OCI-LY7 (cell line): ENCODE measurements at regions of chr6 and their contacts with region 1.

Region 1: GRCh38 chr6:47413752-47414422 is 63.7 kb upstream of the CD2AP start:
- DNase-seq: peak; percentile 82
- H3K4me3 ChIP-seq: peak overlapping the region; percentile 64
- H3K27ac ChIP-seq: peak overlapping the region; percentile 52
- H3K4me1 ChIP-seq: peaks cover 23% of the 10 kb centered on the region
- CTCF ChIP-seq: peak; percentile 99

Region 2: GRCh38 chr6:47009566-47009965 is 404.3 kb before region 1 on chr6:
- CTCF ChIA-PET with region 1: no interaction called
- POLR2A ChIA-PET with region 1: no interaction called
- intact Hi-C with region 1: no loop called
- DNase-seq: no peak
- H3K4me3 ChIP-seq: no peak overlapping the region
- H3K27ac ChIP-seq: no peak overlapping the region
- H3K4me1 ChIP-seq: no peaks in the 10 kb centered on the region
- CTCF ChIP-seq: peak; percentile 30; the same call in 1 of the 2 replicates

Region 3: GRCh38 chr6:47097092-47097945 is 316.6 kb before region 1 on chr6:
- CTCF ChIA-PET with region 1: no interaction called
- POLR2A ChIA-PET with region 1: interaction called, 3 read pairs
- intact Hi-C with region 1: loop called (anchors 2 kb)
- DNase-seq: peak; percentile 90
- H3K4me3 ChIP-seq: no peak overlapping the region
- H3K27ac ChIP-seq: no peak overlapping the region
- H3K4me1 ChIP-seq: peaks cover 15% of the 10 kb centered on the region
- CTCF ChIP-seq: peak; percentile 97

Region 4: GRCh38 chr6:47455534-47456209 is 41.8 kb after region 1 on chr6:
- CTCF ChIA-PET with region 1: no interaction called
- POLR2A ChIA-PET with region 1: interaction called, 4 read pairs
- intact Hi-C with region 1: loop called (anchors 1 kb)
- DNase-seq: no peak
- H3K4me3 ChIP-seq: no peak overlapping the region
- H3K27ac ChIP-seq: no peak overlapping the region
- H3K4me1 ChIP-seq: peaks cover 30% of the 10 kb centered on the region
- CTCF ChIP-seq: no peak

Region 5: GRCh38 chr6:47631269-47631772 is 217.4 kb after region 1 on chr6:
- CTCF ChIA-PET with region 1: interaction called, 5 read pairs
- POLR2A ChIA-PET with region 1: no interaction called
- intact Hi-C with region 1: loop called (anchors 1 kb)
- DNase-seq: peak; percentile 72
- H3K4me3 ChIP-seq: no peak overlapping the region
- H3K27ac ChIP-seq: no peak overlapping the region
- H3K4me1 ChIP-seq: no peaks in the 10 kb centered on the region
- CTCF ChIP-seq: peak; percentile 86

Region 6: DNA sequence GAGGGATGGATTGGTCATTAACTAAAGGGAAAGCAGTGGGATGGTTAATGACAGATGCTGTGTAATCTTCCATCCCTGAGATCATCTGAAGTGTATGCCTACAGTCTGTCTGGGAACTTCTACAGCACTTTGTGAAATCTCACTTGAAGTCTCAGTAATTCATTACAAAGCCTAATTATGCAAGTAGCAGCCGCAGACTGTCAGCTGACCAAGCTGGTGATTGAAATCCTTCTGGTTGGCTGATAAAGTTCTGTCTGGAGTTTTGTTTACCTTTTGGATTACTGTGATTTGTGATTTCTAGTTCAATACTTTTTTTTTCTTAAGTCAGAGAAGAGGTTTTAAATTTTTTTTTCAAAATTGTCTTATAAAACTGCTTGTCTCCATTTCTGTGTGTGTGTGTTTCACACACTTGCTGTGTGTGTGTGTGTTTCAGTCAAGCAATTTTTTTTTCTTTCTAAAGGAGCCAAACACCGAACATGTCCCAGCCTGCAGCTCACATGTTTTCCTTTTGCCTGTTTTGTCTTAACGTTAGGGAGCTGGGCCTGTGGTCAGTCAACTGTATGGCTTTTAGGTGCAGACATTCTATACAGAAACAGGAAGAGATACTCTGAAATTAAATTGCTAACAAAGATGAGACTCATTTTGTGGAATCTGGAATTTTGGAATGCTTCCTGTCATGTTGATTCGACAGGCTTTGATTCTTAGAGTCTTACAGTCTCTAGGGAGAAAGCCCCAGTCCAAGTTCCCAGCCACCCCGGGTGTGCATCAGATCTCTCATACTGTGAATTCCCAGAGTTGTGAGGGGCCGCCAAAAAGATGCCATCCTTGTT is 256.0 kb after region 1 on chr6:
- CTCF ChIA-PET with region 1: no interaction called
- POLR2A ChIA-PET with region 1: no interaction called
- intact Hi-C with region 1: no loop called
- DNase-seq: no peak
- H3K4me3 ChIP-seq: no peak overlapping the region
- H3K27ac ChIP-seq: no peak overlapping the region
- H3K4me1 ChIP-seq: no peaks in the 10 kb centered on the region
- CTCF ChIP-seq: no peak

Region 7: DNA sequence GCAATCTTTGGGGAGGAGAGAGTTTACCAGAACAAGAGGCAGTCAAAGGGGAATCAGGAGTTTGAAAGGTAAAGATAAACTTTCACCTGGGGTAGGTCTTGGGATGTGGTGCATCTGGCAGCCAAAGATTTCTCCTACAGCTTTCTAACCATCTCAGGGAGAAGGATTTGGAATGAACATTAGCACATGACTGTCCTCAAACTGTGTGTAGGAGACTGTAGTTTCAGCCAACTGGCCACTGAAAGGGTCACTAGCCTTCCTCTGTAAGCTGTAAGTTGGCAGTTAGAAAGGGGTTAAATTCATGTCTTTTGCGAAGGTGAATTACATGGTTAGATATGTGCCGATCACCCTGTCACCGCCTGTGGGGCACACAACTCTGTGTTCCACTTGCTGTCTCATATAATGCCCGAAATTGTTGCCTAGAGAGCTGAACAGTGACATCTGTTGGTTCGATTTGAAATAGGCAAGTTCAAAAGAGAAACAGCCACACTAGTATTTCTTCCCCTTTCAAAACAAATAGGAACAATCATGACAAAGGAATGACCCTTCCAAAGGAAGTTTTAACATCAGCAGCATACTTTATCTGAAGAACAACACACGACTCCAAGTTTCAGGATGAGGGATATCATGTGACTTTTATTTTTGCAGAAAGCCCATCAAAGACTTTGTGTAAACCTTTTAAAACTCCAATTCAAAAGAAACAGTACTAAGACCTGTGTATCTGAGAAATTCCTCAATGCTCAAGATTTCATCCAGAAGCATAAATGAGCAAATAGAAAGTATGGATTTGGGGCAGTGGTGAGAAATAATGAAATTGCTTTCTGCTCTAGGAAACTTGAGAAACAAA is 366.8 kb after region 1 on chr6:
- CTCF ChIA-PET with region 1: no interaction called
- POLR2A ChIA-PET with region 1: no interaction called
- intact Hi-C with region 1: loop called (anchors 1 kb)
- DNase-seq: peak; percentile 67
- H3K4me3 ChIP-seq: no peak overlapping the region
- H3K27ac ChIP-seq: no peak overlapping the region
- H3K4me1 ChIP-seq: no peaks in the 10 kb centered on the region
- CTCF ChIP-seq: peak; percentile 91